Dorsolateral prefrontal cortex (tissue), 120 donors: ENCODE measurements at regions of chr3 and their contacts with region 1.

Region 1: DNA sequence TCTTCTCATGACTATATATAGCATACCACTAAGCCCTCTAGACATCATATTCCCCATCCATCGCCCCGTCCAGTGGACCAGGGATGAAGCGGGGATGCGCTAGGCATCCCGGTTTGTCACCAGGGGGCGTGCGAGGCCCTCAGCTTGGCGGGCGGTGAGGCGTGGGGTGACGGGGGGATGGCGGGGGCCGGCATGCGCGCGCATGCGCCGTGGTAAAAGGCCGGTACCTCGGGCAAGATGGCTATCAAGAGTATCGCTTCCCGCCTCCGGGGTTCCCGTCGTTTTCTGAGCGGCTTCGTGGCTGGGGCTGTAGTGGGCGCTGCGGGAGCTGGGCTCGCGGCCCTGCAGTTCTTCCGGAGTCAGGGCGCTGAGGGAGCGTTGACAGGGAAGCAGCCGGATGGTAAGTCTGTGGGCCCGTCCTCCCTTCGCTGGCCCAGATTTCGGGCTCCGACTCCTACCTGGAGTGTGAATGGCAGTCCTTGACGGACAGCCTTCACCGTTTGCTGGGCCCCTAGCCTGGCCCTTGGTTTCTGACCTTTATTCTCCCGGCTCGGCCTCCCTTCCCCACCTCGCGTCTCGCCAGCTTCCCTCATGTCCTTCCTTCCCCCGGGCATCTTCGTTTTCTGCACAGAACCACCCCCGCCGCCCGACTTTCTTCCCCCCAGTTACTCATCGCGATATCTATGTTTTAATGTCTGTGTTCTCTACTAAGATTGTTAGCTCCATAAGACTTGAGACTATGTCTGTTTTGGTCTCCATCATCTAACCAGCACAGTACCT is at the start of gene EXOG:
- DNase-seq: peak; percentile 85 to 96 (median 92)
- H3K4me3 ChIP-seq: peak within 1 kb of the TSS; percentile 59 to 96 (median 83)
- H3K27ac ChIP-seq: peak within 1 kb of the TSS in 54 of 59 donors; percentile 16 to 93 (median 81)
- H3K27me3 ChIP-seq: no peaks in the 10 kb centered on the region
- CTCF ChIP-seq: peak; percentile 83 to 99 (median 95)
- total RNA-seq, gene EXOG: 19.0 to 38.1 (median 27.2) TPM

Region 2: DNA sequence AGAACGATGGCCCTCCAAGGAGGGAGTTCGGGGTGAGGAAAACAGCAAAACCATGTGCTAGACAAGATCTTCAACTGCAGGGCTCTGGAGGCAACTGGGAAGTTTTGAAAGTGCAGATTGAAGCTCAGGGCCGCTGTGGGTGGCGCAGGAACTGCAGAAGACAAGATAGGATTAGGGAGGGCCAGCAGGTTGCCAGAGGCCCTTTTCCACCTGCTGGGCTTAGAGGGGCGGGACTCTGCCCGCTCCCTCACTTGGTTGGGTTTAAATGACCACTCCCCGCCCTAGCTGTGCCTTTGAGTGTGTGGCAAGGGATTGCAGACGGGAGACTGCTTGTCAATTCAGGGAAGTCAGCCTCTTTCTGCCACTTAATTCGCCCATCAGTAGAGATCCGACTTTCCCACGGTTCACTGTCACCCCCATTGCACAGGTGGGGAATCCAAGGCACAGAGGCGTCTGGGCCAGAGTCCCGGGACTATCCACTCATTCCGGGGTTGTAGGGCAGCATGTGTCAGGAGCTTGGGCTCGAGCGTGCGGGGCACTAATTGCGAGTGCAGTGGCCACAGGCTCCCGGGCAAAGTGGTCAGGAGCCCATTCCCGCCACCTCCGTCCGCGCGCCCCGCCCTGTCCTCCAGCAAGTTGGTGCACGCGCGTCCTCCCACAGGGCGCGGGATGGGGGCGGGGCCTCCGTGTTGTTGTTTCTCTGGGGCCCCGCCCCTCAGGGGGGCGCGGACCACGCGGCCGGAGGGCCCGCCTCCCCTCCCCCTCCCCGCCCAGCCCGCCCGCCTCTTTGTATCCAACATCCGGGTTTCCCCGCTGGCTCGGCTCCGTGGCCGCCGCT is 43.0 kb before region 1 on chr3 and contains the start of gene ACVR2B:
- intact Hi-C with region 1: loop called (anchors 5 kb)
- DNase-seq: peak; percentile 82 to 92 (median 88)
- H3K4me3 ChIP-seq: peak within 1 kb of the TSS; percentile 69 to 96 (median 89)
- H3K27ac ChIP-seq: peak within 1 kb of the TSS; percentile 26 to 96 (median 83)
- H3K27me3 ChIP-seq: no peaks in the 10 kb centered on the region
- CTCF ChIP-seq: peak in 9 of 56 donors; percentile 12 to 47 (median 21)
- total RNA-seq, gene ACVR2B: 10.4 to 24.2 (median 15.9) TPM

Region 3: GRCh38 chr3:38651154-38651789 is 155.0 kb after region 1 on chr3:
- intact Hi-C with region 1: loop called in 1 of 2 experiments (anchors 5 kb)
- DNase-seq: peak in 7 of 10 donors; percentile 28 to 73 (median 47)
- H3K4me3 ChIP-seq: peak overlapping the region in 10 of 59 donors; percentile 9 to 46 (median 20)
- H3K27ac ChIP-seq: no peak overlapping the region
- H3K27me3 ChIP-seq: peaks cover 0 to 61% (median 26%) of the 10 kb centered on the region in 45 donors
- CTCF ChIP-seq: peak; percentile 51 to 96 (median 90)